ENCODE measurements at regions of chr14 and their contacts with region 1.

Region 1: GRCh38 chr14:22375321-22375930 is 213.6 kb downstream of the DAD1 start:
- DNase-seq: peak; percentile 62
- H3K4me3 ChIP-seq: no peak overlapping the region
- H3K27ac ChIP-seq: no peak overlapping the region
- H3K4me1 ChIP-seq: no peaks in the 10 kb centered on the region
- H3K27me3 ChIP-seq: peaks cover 28 to 52% of the 10 kb centered on the region in 2 experiments
- CTCF ChIP-seq: peak; percentile 35 to 47
- POLR2A ChIP-seq: no peak

Region 2: GRCh38 chr14:22047115-22047514 is 328.3 kb before region 1 on chr14:
- CTCF ChIA-PET with region 1: no interaction called
- POLR2A ChIA-PET with region 1: no interaction called
- dilution Hi-C with region 1: no loop called
- intact Hi-C with region 1: no loop called
- DNase-seq: peak; percentile 34
- H3K4me3 ChIP-seq: no peak overlapping the region
- H3K27ac ChIP-seq: no peak overlapping the region
- H3K4me1 ChIP-seq: no peaks in the 10 kb centered on the region
- H3K27me3 ChIP-seq: peaks cover 3 to 17% of the 10 kb centered on the region in 2 experiments
- CTCF ChIP-seq: peak; percentile 30 to 41
- POLR2A ChIP-seq: no peak

Region 3: GRCh38 chr14:22112004-22112403 is 263.4 kb before region 1 on chr14:
- CTCF ChIA-PET with region 1: interaction called, 11 read pairs
- POLR2A ChIA-PET with region 1: no interaction called
- dilution Hi-C with region 1: no loop called
- intact Hi-C with region 1: no loop called
- DNase-seq: peak; percentile 25
- H3K4me3 ChIP-seq: no peak overlapping the region
- H3K27ac ChIP-seq: no peak overlapping the region
- H3K4me1 ChIP-seq: no peaks in the 10 kb centered on the region
- H3K27me3 ChIP-seq: peaks cover 5 to 19% of the 10 kb centered on the region in 2 experiments
- CTCF ChIP-seq: peak; percentile 48 to 64
- POLR2A ChIP-seq: no peak

Region 4: GRCh38 chr14:22163051-22163450 is 212.4 kb before region 1 on chr14:
- CTCF ChIA-PET with region 1: interaction called, 75 read pairs
- POLR2A ChIA-PET with region 1: no interaction called
- dilution Hi-C with region 1: no loop called
- intact Hi-C with region 1: loop called (anchors 2 kb)
- DNase-seq: peak; percentile 23
- H3K4me3 ChIP-seq: no peak overlapping the region
- H3K27ac ChIP-seq: no peak overlapping the region
- H3K4me1 ChIP-seq: peaks cover 3% of the 10 kb centered on the region
- H3K27me3 ChIP-seq: peaks cover 10 to 11% of the 10 kb centered on the region in 2 experiments
- CTCF ChIP-seq: peak; percentile 7 to 18
- POLR2A ChIP-seq: no peak

Region 5: DNA sequence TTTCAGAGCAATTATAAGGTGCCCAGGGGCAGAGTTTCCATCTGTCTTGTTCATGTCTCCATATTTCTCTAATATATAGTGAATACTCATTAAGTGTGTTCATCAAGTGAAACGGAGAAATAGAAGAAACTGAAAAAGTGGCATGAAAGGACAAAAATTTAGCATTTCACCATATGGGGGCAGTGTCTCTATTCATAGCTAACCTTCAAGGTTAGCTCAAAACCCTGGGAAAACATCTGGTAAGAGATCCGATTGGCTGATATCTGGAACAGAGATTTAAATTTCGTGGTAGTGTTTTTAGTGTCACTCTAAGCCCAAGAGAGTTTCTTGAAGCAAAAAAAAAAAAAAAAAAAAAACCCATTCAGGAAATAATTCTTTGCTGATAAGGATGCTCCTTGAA is 153.9 kb before region 1 on chr14:
- CTCF ChIA-PET with region 1: interaction called, 15 read pairs
- POLR2A ChIA-PET with region 1: no interaction called
- dilution Hi-C with region 1: no loop called
- intact Hi-C with region 1: loop called (anchors 2 kb)
- DNase-seq: peak; percentile 16
- H3K4me3 ChIP-seq: no peak overlapping the region
- H3K27ac ChIP-seq: no peak overlapping the region
- H3K4me1 ChIP-seq: peaks cover 10% of the 10 kb centered on the region
- H3K27me3 ChIP-seq: peaks cover 7 to 20% of the 10 kb centered on the region in 2 experiments
- CTCF ChIP-seq: peak; percentile 14 to 31
- POLR2A ChIP-seq: no peak

Region 6: DNA sequence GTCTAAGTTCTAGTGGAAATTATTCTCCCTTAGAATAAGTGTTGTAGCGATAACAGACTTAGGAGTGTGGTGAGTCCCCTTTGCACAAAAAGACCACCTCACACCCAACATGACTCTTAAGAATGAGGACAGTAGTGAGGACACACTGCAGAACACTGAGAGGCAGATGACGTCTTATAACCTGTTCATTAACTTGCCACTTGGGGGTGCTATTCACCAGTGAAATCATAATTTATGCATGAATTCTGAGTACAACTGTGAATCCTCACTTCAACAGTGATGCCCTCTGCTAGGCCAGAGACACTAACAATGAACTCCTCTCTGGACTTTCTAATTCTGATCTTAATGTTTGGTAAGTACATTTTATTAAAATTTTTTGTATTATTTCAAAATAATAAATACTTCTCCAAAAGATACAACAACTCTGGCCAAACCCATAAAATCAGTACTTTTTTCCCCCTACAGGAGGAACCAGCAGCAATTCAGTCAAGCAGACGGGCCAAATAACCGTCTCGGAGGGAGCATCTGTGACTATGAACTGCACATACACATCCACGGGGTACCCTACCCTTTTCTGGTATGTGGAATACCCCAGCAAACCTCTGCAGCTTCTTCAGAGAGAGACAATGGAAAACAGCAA is 61.1 kb before region 1 on chr14:
- CTCF ChIA-PET with region 1: interaction called, 225 read pairs
- POLR2A ChIA-PET with region 1: no interaction called
- dilution Hi-C with region 1: no loop called
- intact Hi-C with region 1: loop called (anchors 1 kb)
- DNase-seq: peak; percentile 54
- H3K4me3 ChIP-seq: no peak overlapping the region
- H3K27ac ChIP-seq: no peak overlapping the region
- H3K4me1 ChIP-seq: no peaks in the 10 kb centered on the region
- H3K27me3 ChIP-seq: peaks cover 7 to 10% of the 10 kb centered on the region in 2 experiments
- CTCF ChIP-seq: peak; percentile 64 to 72
- POLR2A ChIP-seq: no peak

Region 7: DNA sequence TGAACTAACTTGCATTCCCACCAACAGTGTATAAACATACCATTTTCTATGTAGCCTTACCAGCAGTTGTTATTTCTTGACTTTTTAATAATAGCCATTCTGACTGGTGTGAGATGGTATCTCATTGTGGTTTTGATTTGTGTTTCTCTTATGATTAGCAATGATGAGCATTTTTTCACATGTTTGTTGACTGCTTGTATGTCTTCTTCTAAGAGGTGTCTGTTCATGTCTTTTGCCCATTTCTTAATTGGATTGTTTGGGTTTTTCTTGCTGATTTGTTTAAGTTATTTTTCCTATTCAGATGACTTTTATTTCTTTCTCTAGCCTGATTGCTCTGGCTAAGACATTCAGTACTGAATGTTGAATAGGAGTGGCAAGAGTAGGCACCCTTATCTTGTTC is 16.7 kb before region 1 on chr14:
- CTCF ChIA-PET with region 1: interaction called, 11 read pairs
- POLR2A ChIA-PET with region 1: no interaction called
- dilution Hi-C with region 1: no loop called
- intact Hi-C with region 1: no loop called
- DNase-seq: no peak
- H3K4me3 ChIP-seq: no peak overlapping the region
- H3K27ac ChIP-seq: no peak overlapping the region
- H3K4me1 ChIP-seq: no peaks in the 10 kb centered on the region
- H3K27me3 ChIP-seq: peaks cover 0 to 17% of the 10 kb centered on the region in 2 experiments
- CTCF ChIP-seq: no peak
- POLR2A ChIP-seq: no peak

Measured in endothelial cell of umbilical vein (primary cell).